ENCODE measurements at regions of chr15 and their contacts with region 1.

Region 1: DNA sequence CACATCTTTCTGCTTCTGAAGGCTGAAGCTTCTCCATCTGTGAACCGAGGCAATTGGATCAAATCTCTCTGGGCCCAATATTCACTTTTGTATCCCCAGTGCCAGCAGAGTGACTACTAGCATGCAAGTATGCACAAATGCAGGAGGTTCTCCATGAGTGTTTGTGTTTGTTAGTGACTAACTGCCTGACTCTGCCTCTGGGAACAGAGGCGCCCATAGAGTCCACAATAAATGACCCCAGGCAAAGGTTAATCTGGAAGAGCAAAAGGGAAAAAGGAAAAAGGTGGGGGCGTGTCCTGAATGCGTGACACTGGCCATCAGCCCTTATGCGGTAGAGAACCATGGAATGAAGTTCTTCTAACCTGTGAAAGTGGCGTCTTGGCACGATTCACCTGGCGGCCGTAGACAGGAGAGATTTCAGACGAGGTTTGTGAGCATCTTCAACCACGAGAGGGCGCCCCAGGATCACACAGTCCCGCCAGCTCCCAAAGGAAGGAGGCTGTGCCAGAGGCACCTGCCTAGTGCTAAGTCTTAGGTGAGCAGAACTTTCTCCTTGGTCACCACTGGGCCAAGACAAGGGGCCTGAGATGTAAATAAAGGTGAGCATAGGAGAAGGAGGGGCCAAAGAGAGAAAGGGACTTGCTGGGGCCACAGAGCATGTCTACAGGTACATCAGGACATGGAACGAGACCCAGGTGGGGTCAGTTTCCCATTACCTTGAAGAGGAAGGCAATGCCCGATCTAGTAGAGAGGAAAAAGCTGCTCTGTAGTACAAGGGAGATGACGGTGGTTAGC is 44.2 kb downstream of the RBPMS2 start:
- DNase-seq: peak; percentile 93
- ATAC-seq: peak; percentile 84
- H3K4me3 Mint-ChIP-seq: no peak overlapping the region
- H3K27ac Mint-ChIP-seq: no peak overlapping the region
- H3K4me1 Mint-ChIP-seq: peaks cover 4% of the 10 kb centered on the region
- H3K27me3 Mint-ChIP-seq: peaks cover 2% of the 10 kb centered on the region

Region 2: GRCh38 chr15:64430000-64430735 is 301.0 kb before region 1 on chr15:
- CTCF ChIA-PET with region 1: interaction called, 3 read pairs
- POLR2A ChIA-PET with region 1: no interaction called
- intact Hi-C with region 1: loop called in 1 of 2 experiments (anchors 1 kb)
- DNase-seq: peak; percentile 35
- ATAC-seq: peak; percentile 61
- H3K4me3 Mint-ChIP-seq: no peak overlapping the region
- H3K27ac Mint-ChIP-seq: peak overlapping the region; percentile 92
- H3K4me1 Mint-ChIP-seq: peaks cover 44% of the 10 kb centered on the region
- H3K27me3 Mint-ChIP-seq: no peaks in the 10 kb centered on the region

Region 3: GRCh38 chr15:64693134-64693533 is 38.1 kb before region 1 on chr15:
- CTCF ChIA-PET with region 1: interaction called, 169 read pairs
- POLR2A ChIA-PET with region 1: no interaction called
- intact Hi-C with region 1: no loop called
- DNase-seq: no peak
- ATAC-seq: no peak
- H3K4me3 Mint-ChIP-seq: no peak overlapping the region
- H3K27ac Mint-ChIP-seq: peak overlapping the region; percentile 70
- H3K4me1 Mint-ChIP-seq: peaks cover 34% of the 10 kb centered on the region
- H3K27me3 Mint-ChIP-seq: no peaks in the 10 kb centered on the region

Region 4: GRCh38 chr15:64809649-64810496 is 78.7 kb after region 1 on chr15:
- CTCF ChIA-PET with region 1: interaction called, 42 read pairs
- POLR2A ChIA-PET with region 1: no interaction called
- intact Hi-C with region 1: loop called (anchors 1 kb)
- DNase-seq: peak; percentile 86
- ATAC-seq: peak; percentile 86
- H3K4me3 Mint-ChIP-seq: no peak overlapping the region
- H3K27ac Mint-ChIP-seq: no peak overlapping the region
- H3K4me1 Mint-ChIP-seq: no peaks in the 10 kb centered on the region
- H3K27me3 Mint-ChIP-seq: peaks cover 3% of the 10 kb centered on the region

Region 5: GRCh38 chr15:65077981-65078352 is 346.8 kb after region 1 on chr15:
- CTCF ChIA-PET with region 1: interaction called, 3 read pairs
- POLR2A ChIA-PET with region 1: no interaction called
- intact Hi-C with region 1: loop called (anchors 1 to 10 kb)
- DNase-seq: peak; percentile 80
- ATAC-seq: peak; percentile 73
- H3K4me3 Mint-ChIP-seq: no peak overlapping the region
- H3K27ac Mint-ChIP-seq: no peak overlapping the region
- H3K4me1 Mint-ChIP-seq: peaks cover 18% of the 10 kb centered on the region
- H3K27me3 Mint-ChIP-seq: peaks cover 25% of the 10 kb centered on the region

Region 6: DNA sequence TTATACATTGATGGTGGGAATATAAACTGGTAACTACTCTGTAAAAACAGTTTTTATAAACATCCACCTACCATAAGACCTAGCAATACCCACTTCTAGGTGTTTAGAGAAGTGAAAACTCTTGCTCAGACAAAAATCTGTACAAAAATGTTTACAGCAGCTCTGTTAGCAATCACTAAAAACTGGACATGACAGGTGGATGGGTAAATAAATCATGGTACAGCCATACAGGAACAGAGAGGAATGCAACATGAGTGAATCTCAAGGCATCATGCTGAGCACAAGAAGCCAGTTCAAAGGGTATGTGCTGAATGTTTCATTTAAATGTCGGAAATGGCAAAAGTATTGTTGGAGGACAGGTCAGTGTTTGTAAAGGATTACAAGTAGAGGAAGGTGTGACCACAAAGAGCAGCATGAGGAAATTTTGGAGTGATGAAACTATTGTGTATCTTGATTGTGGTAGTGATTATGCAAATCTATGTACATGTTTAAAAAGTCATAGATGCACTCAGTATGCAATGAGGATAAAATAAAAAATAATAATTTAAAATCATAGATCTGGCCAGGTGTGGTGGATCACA is 561.8 kb after region 1 on chr15:
- CTCF ChIA-PET with region 1: no interaction called
- POLR2A ChIA-PET with region 1: no interaction called
- intact Hi-C with region 1: loop called in 1 of 2 experiments (anchors 10 kb)
- DNase-seq: no peak
- ATAC-seq: no peak
- H3K4me3 Mint-ChIP-seq: no peak overlapping the region
- H3K27ac Mint-ChIP-seq: no peak overlapping the region
- H3K4me1 Mint-ChIP-seq: peaks cover 22% of the 10 kb centered on the region
- H3K27me3 Mint-ChIP-seq: no peaks in the 10 kb centered on the region